HEK293T (cell line): ENCODE measurements at regions of chr4 and their contacts with region 1.

Region 1: GRCh38 chr4:4507923-4508322 is 33.9 kb downstream of the STX18 start:
- DNase-seq: peak; percentile 31

Region 2: GRCh38 chr4:4519297-4519894 is 11.5 kb after region 1 on chr4:
- CTCF ChIA-PET with region 1: interaction called, 12 read pairs
- POLR2A ChIA-PET with region 1: no interaction called
- DNase-seq: peak; percentile 31